ENCODE measurements at regions of chr1 and their contacts with region 1.

Region 1: GRCh38 chr1:24964811-24965570 is 34.9 kb upstream of the RUNX3 start:
- DNase-seq: peak; percentile 99
- ATAC-seq: peak; percentile 69
- H3K4me3 Mint-ChIP-seq: peak overlapping the region; percentile 99
- H3K27ac Mint-ChIP-seq: peak overlapping the region; percentile 98
- H3K4me1 Mint-ChIP-seq: peaks cover 63% of the 10 kb centered on the region
- H3K27me3 Mint-ChIP-seq: no peaks in the 10 kb centered on the region
- CTCF ChIP-seq: no peak

Region 2: DNA sequence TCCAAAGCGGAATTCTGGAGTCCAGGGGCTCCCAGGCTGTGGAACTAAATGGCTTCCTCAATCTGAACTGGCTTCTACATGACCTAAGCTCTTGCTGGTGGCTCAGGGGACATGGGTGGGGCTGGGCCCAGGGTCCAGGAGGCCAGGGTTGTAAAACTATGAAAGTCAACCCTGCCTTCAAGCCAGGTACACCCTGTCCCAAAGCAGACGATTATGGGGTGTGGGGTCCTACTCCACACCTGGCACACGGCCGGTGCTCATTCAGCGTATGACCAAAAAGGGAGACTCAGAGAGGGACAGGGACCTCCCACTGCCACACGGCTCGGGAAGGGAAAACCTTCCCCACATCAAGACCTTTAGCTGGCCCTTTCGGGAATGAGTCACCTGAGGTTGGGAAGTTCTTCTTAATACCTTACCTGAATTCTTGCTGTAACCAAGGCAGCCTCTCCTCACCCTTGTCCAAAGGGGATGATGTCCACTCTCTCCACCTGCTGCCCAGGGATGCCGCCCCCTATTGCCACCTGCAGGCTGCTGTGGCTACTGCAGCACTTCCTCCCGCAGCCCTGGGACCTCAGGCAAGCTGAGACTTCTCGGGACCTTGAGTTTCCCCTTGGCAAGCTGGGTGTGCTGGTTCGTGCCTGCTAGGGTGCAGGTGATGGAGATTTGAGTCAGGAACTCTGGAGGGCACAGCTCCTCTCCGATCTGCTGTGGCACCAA is 67.1 kb before region 1 on chr1:
- CTCF ChIA-PET with region 1: no interaction called
- POLR2A ChIA-PET with region 1: no interaction called
- intact Hi-C with region 1: no loop called
- DNase-seq: peak; percentile 78
- ATAC-seq: peak; percentile 45
- H3K4me3 Mint-ChIP-seq: peak overlapping the region; percentile 27
- H3K27ac Mint-ChIP-seq: peak overlapping the region; percentile 42
- H3K4me1 Mint-ChIP-seq: peaks cover 38% of the 10 kb centered on the region
- H3K27me3 Mint-ChIP-seq: no peaks in the 10 kb centered on the region
- CTCF ChIP-seq: peak; percentile 95

Region 3: DNA sequence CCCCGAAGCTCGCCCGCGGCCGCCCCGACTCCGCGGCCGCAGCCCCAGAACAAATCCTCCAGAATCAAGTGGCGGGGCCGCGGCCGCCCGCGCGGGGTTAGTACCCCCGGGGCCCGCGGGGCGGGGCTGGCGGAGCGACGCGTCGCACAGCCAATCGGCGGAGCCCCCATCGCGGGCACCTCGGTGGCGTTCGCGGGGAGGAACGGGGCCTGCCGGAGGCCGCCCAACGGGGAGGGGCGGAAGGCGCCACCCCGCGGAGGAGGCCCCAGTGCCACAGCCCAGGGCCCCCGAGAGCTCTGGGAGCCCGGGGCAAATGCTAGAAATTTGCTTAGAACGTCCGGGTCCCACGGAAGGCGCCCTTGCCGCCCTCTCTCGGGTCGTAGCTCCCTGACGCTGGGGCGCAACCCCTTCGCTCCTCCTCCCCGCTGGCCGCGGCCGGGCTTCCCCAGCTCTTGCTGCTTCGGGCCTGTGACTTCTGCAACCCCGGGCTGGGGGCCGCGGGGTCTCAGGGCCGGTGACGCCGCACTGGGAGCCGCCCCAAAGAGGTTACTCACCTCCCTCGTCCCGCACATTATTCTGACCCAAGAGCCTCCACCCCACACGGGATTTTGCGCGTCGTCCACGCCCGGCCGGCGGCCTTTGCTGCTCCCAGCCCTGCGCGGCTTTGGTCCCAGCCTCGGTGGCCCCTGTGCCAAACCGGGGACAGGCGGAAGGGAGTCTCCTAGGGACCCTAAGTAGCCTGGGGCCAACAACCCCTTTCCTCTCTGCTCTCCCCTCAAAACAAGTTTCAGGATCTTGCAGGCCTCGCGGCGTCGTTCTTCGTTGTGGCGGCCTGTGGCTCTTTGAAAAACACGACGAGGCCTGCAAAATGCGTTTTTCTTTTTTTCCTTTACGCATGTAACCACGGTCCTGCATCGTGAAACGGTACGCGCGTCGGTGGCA is 34.5 kb before region 1 on chr1 and contains the start of gene RUNX3:
- CTCF ChIA-PET with region 1: interaction called, 17 read pairs
- POLR2A ChIA-PET with region 1: interaction called, 113 read pairs
- intact Hi-C with region 1: loop called (anchors 2 kb)
- DNase-seq: peak; percentile 92
- ATAC-seq: peak; percentile 81
- H3K4me3 Mint-ChIP-seq: peak within 1 kb of the TSS; percentile 96
- H3K27ac Mint-ChIP-seq: peak within 1 kb of the TSS; percentile 90
- H3K4me1 Mint-ChIP-seq: peaks cover 60% of the 10 kb centered on the region
- H3K27me3 Mint-ChIP-seq: no peaks in the 10 kb centered on the region
- CTCF ChIP-seq: no peak
- total RNA-seq, gene RUNX3: 180 to 183 TPM

Region 4: DNA sequence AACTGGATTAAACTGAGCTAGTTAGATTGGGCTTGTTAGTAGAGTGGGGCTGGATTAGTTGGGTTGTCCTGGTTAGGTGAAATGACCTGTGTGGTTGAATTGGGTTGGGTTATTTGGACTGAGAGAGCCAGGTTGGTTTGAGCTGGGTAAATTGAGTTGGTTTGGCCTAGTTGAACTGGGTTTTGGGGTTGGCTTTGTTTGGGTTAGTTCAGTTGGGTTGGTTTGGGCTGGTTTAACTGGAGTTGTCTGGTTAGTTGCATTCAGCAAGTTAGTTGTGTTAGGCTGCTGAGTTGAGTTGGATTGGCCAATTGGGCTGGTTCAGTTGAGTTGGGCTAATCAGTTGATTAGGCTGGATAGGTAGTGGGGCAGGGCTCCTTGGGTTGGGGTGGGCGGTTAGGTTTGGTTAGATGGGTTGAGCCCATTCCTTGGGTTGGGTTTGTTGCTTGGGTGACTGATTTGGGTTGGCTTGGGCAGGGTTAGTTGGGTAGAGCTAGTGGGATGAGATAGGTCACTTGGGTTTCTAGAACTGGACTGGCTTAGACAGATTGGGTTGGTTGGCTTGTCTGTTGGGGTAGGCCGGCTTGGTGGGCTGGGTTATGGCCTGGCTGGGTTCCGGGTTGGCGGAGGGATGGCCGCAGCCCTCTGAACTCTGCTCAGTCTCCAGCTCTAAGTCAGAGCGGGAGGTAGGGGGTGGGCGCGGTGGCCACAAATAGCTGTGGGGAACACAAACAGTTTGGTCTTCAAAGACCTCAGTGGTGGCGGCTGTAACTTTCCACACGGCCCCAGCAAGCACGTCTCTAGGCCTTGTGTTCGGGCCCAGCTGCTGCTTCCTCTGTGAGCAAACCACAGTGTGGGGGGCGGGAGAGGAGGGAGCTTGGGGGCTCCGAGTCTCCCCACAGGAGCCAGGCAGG is 32.2 kb after region 1 on chr1:
- CTCF ChIA-PET with region 1: interaction called, 5 read pairs
- POLR2A ChIA-PET with region 1: interaction called, 157 read pairs
- intact Hi-C with region 1: loop called (anchors 2 kb)
- DNase-seq: peak; percentile 99
- ATAC-seq: peak; percentile 74
- H3K4me3 Mint-ChIP-seq: peak overlapping the region; percentile 73
- H3K27ac Mint-ChIP-seq: peak overlapping the region; percentile 97
- H3K4me1 Mint-ChIP-seq: peaks cover 92% of the 10 kb centered on the region
- H3K27me3 Mint-ChIP-seq: no peaks in the 10 kb centered on the region
- CTCF ChIP-seq: no peak

Region 5: GRCh38 chr1:25031966-25032667 is 67.1 kb after region 1 on chr1:
- CTCF ChIA-PET with region 1: interaction called, 169 read pairs
- POLR2A ChIA-PET with region 1: interaction called, 172 read pairs
- intact Hi-C with region 1: loop called (anchors 2 kb)
- DNase-seq: peak; percentile 83
- ATAC-seq: peak; percentile 39
- H3K4me3 Mint-ChIP-seq: no peak overlapping the region
- H3K27ac Mint-ChIP-seq: no peak overlapping the region
- H3K4me1 Mint-ChIP-seq: peaks cover 84% of the 10 kb centered on the region
- H3K27me3 Mint-ChIP-seq: no peaks in the 10 kb centered on the region
- CTCF ChIP-seq: no peak

Region 6: DNA sequence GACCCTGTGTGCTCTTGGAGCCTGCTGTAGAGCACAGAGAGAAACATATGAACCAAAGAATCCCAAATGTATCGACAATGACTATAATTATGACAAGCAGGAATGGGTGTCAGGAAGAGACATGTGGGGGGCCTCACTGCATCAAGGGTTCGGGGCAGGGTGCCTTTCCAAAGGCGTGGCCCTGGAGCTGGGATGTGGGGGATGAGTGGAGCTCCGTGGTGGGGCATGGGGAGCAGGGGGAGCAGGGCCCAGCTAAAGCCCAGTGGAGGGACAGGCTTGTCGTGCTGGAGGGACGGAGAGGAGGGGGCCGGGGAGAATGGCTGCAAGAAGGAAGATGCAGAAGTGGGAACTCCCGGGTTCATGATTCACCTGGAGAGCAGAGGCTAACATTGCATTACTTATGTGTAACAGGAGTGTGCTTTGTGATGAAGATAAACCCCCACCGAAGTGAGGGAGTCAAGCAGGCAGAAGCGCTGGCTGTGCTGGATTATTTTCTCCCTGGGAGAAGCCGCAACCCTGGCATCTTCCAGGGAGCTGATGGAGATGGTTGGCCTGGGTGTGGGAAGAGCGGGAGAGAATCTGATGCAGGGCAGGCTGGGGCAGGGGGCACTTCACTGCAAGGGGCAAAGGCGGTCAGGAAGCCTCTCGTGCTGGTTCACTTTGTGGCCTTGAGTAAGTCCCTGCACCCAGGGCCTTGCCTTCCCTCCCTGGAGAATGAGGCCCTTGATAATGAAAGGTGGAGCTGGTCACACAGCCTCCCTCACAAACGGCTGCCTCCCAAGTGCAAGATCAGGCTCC is 89.7 kb after region 1 on chr1:
- CTCF ChIA-PET with region 1: no interaction called
- POLR2A ChIA-PET with region 1: no interaction called
- intact Hi-C with region 1: no loop called
- DNase-seq: no peak
- ATAC-seq: no peak
- H3K4me3 Mint-ChIP-seq: no peak overlapping the region
- H3K27ac Mint-ChIP-seq: no peak overlapping the region
- H3K4me1 Mint-ChIP-seq: peaks cover 3% of the 10 kb centered on the region
- H3K27me3 Mint-ChIP-seq: peaks cover 3% of the 10 kb centered on the region
- CTCF ChIP-seq: no peak

Measured in activated CD8-positive, alpha-beta T cell treated with anti-CD3 and anti-CD28 coated beads for 36 hours (primary cell).